CD4-positive, alpha-beta T cell (primary cell): ENCODE measurements at regions of chr15 and their contacts with region 1.

Region 1: DNA sequence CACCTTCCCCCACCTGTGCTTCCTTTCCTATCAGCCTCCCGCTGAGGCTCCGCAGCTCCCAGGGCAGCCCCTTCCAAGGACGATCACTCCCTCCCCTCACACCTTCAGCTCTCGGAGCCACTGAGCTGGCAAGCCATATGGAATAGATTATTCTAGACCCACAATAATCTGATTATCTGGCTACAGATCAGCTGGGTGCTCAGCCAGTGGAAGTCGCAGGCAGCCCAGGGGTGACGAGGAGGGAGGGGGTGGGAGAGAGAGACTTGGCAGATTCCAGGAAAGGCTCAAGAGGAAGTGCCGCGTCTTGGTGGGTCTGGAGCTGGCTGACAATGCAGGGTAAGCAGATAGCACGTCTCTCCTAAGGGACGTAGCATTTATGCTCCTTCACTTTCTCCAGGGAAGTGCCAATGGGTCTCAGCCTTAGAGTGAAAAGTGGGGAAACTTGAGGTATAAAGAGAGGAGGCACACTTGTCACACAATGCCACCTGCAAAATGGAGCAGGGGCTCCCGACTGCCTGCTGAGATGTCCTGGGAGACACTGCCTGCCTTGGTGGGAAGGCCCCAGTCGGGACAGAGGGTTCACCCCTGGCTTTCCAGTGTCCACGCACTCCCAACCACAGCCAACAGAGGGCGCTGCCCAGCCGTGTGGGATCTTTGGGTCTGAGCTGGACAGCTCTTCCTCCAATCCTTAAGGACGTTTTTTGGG is 9.4 kb upstream of the MESP1 start:
- DNase-seq: peak; percentile 23 to 77 (median 54)
- ATAC-seq: peak; percentile 68
- H3K4me3 ChIP-seq: no peak overlapping the region
- H3K4me3 Mint-ChIP-seq: no peak overlapping the region
- H3K27ac ChIP-seq: no peak overlapping the region
- H3K27ac Mint-ChIP-seq: no peak overlapping the region
- H3K4me1 ChIP-seq: peaks cover 4% of the 10 kb centered on the region
- H3K4me1 Mint-ChIP-seq: no peaks in the 10 kb centered on the region
- H3K27me3 ChIP-seq: no peaks in the 10 kb centered on the region
- H3K27me3 Mint-ChIP-seq: no peaks in the 10 kb centered on the region
- CTCF ChIP-seq: peak; percentile 76

Region 2: GRCh38 chr15:89575146-89575655 is 185.3 kb before region 1 on chr15 and contains the start of gene TICRR:
- CTCF ChIA-PET with region 1: no interaction called
- POLR2A ChIA-PET with region 1: no interaction called
- intact Hi-C with region 1: no loop called
- DNase-seq: peak; percentile 86 to 98 (median 91)
- ATAC-seq: peak; percentile 98
- H3K4me3 ChIP-seq: peak within 1 kb of the TSS; percentile 68
- H3K4me3 Mint-ChIP-seq: peak within 1 kb of the TSS; percentile 91
- H3K27ac ChIP-seq: no peak within 1 kb of the TSS
- H3K27ac Mint-ChIP-seq: peak within 1 kb of the TSS; percentile 43
- H3K4me1 ChIP-seq: peaks cover 17% of the 10 kb centered on the region
- H3K4me1 Mint-ChIP-seq: peaks cover 5% of the 10 kb centered on the region
- H3K27me3 ChIP-seq: no peaks in the 10 kb centered on the region
- H3K27me3 Mint-ChIP-seq: peaks cover 11% of the 10 kb centered on the region
- CTCF ChIP-seq: no peak
- total RNA-seq, gene TICRR: 0.05 to 0.06 TPM

Region 3: DNA sequence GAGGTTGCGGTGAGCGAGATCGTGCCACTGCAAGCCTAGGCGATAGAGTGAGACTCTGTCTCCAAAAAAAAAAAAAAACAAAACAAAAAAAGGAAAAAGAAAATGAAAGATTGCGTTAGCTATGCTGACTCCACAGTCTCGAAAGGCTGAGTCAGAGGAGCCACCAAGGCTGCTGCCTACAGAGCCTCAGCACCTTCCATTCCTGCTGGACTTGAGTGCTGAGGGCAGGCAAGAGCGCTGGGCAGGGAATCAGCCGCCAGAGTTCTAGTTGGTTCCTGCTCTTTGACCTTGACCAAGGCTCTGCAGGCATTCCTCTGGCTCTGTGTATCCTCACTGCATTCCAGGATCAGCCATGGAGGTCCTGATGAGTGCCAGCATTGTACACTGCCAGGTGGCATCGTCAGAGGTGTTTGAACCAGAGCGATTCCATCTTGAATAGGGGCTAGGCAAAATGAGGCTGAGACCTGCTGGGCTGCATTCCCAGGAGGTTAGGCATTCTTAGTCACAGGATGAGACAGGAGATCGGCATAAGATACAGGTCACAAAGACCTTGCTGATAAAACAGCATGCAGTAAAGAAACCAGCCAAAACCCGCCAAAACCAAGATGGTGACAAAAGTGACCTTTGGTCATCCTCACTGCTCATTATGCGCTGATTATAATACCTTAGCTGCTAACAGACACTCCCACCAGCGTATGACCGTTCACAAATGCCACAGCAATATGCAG is 21.6 kb after region 1 on chr15:
- CTCF ChIA-PET with region 1: no interaction called
- POLR2A ChIA-PET with region 1: no interaction called
- intact Hi-C with region 1: no loop called
- DNase-seq: peak in 2 of 14 experiments; percentile 41 to 53
- ATAC-seq: no peak
- H3K4me3 ChIP-seq: no peak overlapping the region
- H3K4me3 Mint-ChIP-seq: no peak overlapping the region
- H3K27ac ChIP-seq: no peak overlapping the region
- H3K27ac Mint-ChIP-seq: no peak overlapping the region
- H3K4me1 ChIP-seq: peaks cover 13% of the 10 kb centered on the region
- H3K4me1 Mint-ChIP-seq: no peaks in the 10 kb centered on the region
- H3K27me3 ChIP-seq: peaks cover 5 to 9% of the 10 kb centered on the region in 2 experiments
- H3K27me3 Mint-ChIP-seq: peaks cover 35% of the 10 kb centered on the region
- CTCF ChIP-seq: no peak

Region 4: DNA sequence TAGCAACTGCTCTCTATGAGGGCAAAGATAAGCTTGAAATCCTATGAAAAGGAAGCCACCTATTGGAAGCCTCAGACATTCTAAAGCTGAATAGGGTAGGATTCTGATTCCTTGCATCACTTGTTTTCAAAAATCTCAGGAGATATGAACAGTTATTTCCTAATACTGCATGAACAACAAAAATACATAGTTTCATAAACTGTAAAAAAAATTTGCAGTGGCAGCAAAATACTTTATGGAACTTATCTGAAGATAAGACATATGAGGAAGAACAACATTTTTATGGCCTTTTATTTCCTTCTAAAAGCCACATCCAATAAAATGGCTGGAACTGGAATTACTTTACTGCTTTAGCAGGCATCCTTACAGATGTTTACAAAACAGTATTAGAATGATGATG is 103.5 kb after region 1 on chr15:
- CTCF ChIA-PET with region 1: no interaction called
- POLR2A ChIA-PET with region 1: no interaction called
- intact Hi-C with region 1: loop called in 1 of 2 experiments (anchors 5 kb)
- DNase-seq: no peak
- ATAC-seq: no peak
- H3K4me3 ChIP-seq: no peak overlapping the region
- H3K4me3 Mint-ChIP-seq: no peak overlapping the region
- H3K27ac ChIP-seq: no peak overlapping the region
- H3K27ac Mint-ChIP-seq: no peak overlapping the region
- H3K4me1 ChIP-seq: no peaks in the 10 kb centered on the region
- H3K4me1 Mint-ChIP-seq: no peaks in the 10 kb centered on the region
- H3K27me3 ChIP-seq: no peaks in the 10 kb centered on the region
- H3K27me3 Mint-ChIP-seq: no peaks in the 10 kb centered on the region
- CTCF ChIP-seq: no peak

Region 5: GRCh38 chr15:90071208-90071807 is 310.9 kb after region 1 on chr15:
- CTCF ChIA-PET with region 1: no interaction called
- POLR2A ChIA-PET with region 1: no interaction called
- intact Hi-C with region 1: loop called (anchors 1 to 5 kb)
- DNase-seq: peak; percentile 65 to 89 (median 79)
- ATAC-seq: peak; percentile 98
- H3K4me3 ChIP-seq: no peak overlapping the region
- H3K4me3 Mint-ChIP-seq: no peak overlapping the region
- H3K27ac ChIP-seq: no peak overlapping the region
- H3K27ac Mint-ChIP-seq: peak overlapping the region; percentile 69
- H3K4me1 ChIP-seq: peaks cover 9% of the 10 kb centered on the region
- H3K4me1 Mint-ChIP-seq: peaks cover 6% of the 10 kb centered on the region
- H3K27me3 ChIP-seq: no peaks in the 10 kb centered on the region
- H3K27me3 Mint-ChIP-seq: no peaks in the 10 kb centered on the region
- CTCF ChIP-seq: peak; percentile 83

Region 6: DNA sequence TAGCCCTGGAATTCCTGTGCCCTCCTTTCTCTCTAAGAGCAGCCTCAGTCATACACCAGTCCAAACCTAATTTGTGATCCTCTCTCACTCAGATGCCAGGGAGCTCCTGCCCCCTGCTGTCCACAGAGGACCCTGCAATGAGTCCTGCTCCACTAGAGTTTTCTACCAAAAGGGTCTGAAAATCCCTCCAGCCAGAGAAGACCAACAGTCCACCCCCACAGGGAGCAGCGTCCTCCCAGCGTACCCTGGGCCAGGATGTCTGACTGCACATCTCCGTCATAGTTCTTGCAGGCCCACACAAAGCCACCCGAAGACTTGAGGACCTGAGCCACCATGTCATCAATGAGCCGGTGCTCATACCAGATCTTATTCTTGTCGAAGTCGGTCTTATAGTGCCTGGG is 326.4 kb after region 1 on chr15:
- CTCF ChIA-PET with region 1: no interaction called
- POLR2A ChIA-PET with region 1: interaction called, 3 read pairs
- intact Hi-C with region 1: loop called in 1 of 2 experiments (anchors 5 kb)
- DNase-seq: peak in 13 of 14 experiments; percentile 23 to 71 (median 47)
- ATAC-seq: peak; percentile 85
- H3K4me3 ChIP-seq: no peak overlapping the region
- H3K4me3 Mint-ChIP-seq: no peak overlapping the region
- H3K27ac ChIP-seq: no peak overlapping the region
- H3K27ac Mint-ChIP-seq: peak overlapping the region; percentile 59
- H3K4me1 ChIP-seq: peaks cover 11% of the 10 kb centered on the region
- H3K4me1 Mint-ChIP-seq: peaks cover 9% of the 10 kb centered on the region
- H3K27me3 ChIP-seq: no peaks in the 10 kb centered on the region
- H3K27me3 Mint-ChIP-seq: no peaks in the 10 kb centered on the region
- CTCF ChIP-seq: peak; percentile 66